ENCODE measurements at regions of chr9 and their contacts with region 1.

Region 1: GRCh38 chr9:117411548-117411947 is 3.3 kb downstream of the ASTN2 start:
- DNase-seq: peak; percentile 44
- H3K4me3 Mint-ChIP-seq: no peak overlapping the region
- H3K27ac Mint-ChIP-seq: no peak overlapping the region
- H3K4me1 Mint-ChIP-seq: no peaks in the 10 kb centered on the region
- H3K27me3 Mint-ChIP-seq: no peaks in the 10 kb centered on the region
- CTCF ChIP-seq: peak; percentile 9

Region 2: GRCh38 chr9:117073539-117074341 is 337.8 kb before region 1 on chr9:
- CTCF ChIA-PET with region 1: no interaction called
- POLR2A ChIA-PET with region 1: no interaction called
- intact Hi-C with region 1: loop called (anchors 5 kb)
- DNase-seq: peak; percentile 63
- H3K4me3 Mint-ChIP-seq: no peak overlapping the region
- H3K27ac Mint-ChIP-seq: no peak overlapping the region
- H3K4me1 Mint-ChIP-seq: peaks cover 6% of the 10 kb centered on the region
- H3K27me3 Mint-ChIP-seq: no peaks in the 10 kb centered on the region
- CTCF ChIP-seq: peak; percentile 37

Region 3: DNA sequence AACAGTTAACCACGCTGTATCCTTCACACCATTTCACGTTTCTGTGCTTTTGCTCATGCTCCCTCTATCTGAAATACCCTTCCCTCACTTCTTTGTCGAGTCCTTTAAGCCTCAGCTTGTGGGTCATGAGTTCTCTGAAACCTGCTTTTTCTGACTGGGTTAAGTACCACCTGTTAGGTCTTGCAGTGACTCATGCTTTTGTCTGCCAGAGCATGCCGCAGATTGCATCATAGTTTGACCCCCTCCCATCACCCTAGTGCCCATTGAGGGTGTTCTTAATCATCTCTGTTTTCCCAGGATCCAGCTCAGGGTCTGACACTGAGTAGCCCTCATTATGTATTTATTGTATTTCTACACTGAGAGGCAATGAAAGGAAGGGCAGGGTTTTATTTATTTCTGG is 186.9 kb before region 1 on chr9:
- CTCF ChIA-PET with region 1: no interaction called
- POLR2A ChIA-PET with region 1: no interaction called
- intact Hi-C with region 1: no loop called
- DNase-seq: peak; percentile 37
- H3K4me3 Mint-ChIP-seq: no peak overlapping the region
- H3K27ac Mint-ChIP-seq: no peak overlapping the region
- H3K4me1 Mint-ChIP-seq: no peaks in the 10 kb centered on the region
- H3K27me3 Mint-ChIP-seq: no peaks in the 10 kb centered on the region
- CTCF ChIP-seq: no peak

Measured in MCF 10A (cell line).